Cardiac septum (tissue), 1 donor: ENCODE measurements at regions of chr7 and their contacts with region 1.

Region 1: GRCh38 chr7:101815835-101816493 is 1.5 kb upstream of the CUX1 start:
- DNase-seq: peak; percentile 82

Region 2: DNA sequence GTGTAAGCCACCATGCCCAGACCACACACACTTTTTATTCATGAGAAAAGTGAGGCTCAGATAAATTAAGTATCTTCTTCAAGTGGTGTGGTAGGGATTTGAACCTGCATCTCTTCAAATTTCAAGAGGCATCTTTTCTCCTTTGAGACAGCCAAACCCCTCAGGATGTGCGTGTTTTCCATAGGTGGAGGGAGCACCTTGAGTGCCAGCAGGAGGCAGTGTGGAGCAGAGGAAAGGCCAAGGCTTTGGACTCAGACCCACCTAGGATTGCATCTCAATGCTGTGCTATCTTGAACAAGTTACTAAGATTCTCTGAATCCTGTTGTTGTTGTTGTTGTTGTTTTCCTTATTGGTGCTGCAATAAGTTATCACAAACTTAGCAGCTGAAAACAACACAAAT is 146.7 kb before region 1 on chr7:
- intact Hi-C with region 1: no loop called
- DNase-seq: no peak

Region 3: DNA sequence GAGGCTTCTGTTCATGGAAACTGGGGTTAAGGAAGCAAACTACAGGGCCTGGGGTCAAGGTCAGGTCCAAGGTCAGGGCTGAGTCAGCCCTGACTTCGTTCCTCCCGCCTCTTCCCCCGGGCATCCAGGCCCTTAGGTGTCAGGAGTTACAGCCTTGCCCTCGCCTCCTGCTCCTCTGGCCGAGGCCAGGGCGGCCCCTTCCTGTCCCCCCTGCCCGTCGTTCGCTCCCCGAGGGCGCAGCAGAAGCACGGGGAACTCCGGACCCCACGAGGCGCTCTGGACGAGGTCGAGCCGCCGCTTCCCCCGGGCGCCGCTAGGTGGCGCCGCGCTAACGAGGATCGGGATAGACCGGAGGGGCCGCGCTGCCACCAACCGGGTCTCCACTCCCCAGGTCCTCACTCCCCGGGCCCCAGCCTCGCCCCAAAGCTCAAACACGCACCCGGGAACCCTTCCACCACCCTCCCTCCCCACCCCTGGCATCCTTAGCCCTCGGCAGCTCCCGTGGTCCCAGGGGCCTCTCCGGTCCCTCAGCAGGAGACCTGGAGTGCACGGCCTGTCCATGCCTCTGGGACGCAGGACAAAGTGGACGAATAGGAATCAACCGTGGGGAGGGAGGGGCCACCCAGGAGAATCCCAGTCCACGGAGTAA is 127.7 kb before region 1 on chr7:
- intact Hi-C with region 1: loop called (anchors 1 kb)
- DNase-seq: peak; percentile 92

Region 4: DNA sequence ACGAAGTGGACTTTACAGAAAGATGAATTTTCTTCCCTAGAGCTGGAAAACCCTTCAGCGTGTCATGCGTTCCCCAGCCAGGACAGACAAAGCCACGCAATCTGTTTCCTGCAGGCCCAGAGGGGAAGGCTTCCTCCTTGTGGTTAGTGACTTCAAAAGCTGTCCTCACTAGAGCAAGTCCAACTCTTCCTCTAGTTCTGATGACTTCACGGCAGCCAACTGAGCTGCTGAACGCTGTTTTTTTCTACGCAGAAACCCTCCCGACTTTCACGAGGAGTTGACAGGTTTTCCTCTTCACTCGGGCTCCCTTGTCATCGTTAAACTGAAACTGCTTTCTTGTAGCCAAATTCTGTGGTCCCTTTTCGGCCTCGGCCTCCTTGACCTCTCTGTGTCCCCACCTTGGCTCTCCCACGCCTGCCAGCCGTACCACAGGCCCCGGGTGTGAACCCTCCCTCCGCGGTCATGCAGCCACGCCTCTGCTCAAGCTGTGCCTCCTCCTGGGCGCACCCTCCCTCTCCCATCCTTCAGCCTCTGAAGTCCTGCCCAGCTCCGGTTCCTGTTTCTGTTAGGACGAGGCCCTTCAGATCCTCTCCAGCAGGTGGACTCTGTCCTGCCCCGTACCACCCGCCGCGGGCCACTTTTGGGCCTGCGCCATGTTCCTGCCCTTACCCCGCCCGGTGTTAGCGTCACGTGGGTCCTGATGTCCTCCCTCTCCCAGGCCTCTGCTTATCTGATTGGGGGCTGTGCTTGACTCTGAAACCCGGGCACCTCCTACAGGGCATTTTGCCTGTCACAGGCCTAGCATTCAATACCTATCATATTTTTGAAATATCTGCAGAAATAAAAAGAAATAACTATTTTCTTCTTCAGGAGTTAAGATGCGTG is 40.8 kb after region 1 on chr7:
- intact Hi-C with region 1: loop called (anchors 2 kb)
- DNase-seq: peak; percentile 97

Region 5: GRCh38 chr7:101900103-101900502 is 84.1 kb after region 1 on chr7:
- intact Hi-C with region 1: no loop called
- DNase-seq: peak; percentile 85

Region 6: GRCh38 chr7:101936611-101937231 is 120.8 kb after region 1 on chr7:
- intact Hi-C with region 1: loop called (anchors 5 kb)
- DNase-seq: no peak

Region 7: DNA sequence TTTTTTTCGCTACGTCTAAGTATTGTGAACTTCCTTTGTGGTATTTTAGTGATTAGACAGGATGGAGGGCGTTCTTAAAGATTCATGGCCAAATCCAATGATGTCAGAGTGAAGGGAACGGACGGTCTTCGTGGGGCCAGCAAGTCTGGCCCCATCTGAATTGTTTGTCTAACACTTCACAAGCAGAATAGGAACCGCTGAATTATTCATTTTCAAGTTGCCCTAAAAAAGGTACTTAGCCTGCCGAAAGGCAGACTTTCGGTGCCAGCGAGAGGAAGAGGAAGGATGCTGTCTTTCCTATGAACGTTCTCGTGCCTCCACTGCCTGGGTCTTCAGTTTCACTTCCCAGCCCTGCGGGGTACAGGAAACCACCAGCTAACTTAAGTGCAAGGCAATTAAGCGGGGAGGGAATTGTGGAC is 325.0 kb after region 1 on chr7:
- intact Hi-C with region 1: loop called (anchors 10 kb)
- DNase-seq: no peak